ENCODE measurements at regions of chr17 and their contacts with region 1.

Region 1: DNA sequence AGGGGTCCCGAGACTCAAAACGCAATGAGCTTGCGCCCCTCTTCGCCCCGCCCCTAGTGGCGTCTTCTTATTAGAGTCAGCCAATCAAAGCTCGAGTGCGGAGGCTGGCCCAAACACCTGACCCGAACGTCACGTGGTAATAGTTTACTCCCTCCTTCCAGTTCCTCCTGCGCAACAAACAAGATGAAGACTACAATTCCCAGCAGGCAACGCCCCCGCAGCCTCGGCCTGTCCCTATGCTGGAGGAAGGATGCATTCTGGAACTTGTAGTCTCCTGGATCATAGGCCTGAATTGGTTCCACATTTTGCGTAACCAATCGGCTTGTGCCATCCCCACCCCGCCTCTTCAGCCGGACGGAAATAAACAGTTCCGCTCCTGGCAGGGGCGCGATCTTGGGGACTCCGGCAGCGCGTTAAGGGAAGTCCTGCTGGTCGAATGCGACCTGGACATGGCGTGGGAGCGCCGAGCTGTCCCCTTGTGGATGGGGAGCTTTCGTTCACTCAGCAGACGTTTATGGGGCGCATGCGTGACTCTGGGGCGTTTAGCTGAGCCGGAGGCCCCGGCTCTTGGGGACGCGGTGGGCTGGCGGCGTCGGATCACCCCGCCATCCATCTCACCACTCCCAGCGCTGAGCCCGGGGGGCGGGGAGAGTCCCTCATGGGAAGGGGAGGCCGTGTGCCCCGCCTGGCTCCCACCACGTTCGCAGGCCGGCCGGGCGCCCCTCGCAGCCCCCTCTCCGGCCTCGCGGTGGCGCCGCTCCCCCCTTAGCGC is at the start of gene WBP2:
- DNase-seq: peak; percentile 100
- H3K4me3 ChIP-seq: peak within 1 kb of the TSS; percentile 79 to 97 (median 89)
- H3K27ac ChIP-seq: peak within 1 kb of the TSS; percentile 96 to 100 (median 98)
- H3K4me1 ChIP-seq: peaks cover 0 to 48% (median 39%) of the 10 kb centered on the region in 4 donors
- H3K27me3 ChIP-seq: no peaks in the 10 kb centered on the region
- CTCF ChIP-seq: peak; percentile 22 to 51 (median 32)
- EP300 ChIP-seq: no peak
- POLR2A ChIP-seq: peak; percentile 93 to 98
- total RNA-seq, gene WBP2: 44.2 to 73.1 (median 56.9) TPM

Region 2: GRCh38 chr17:75784473-75785015 is 71.0 kb before region 1 on chr17 and contains the start of gene UNK:
- intact Hi-C with region 1: loop called (anchors 2 kb)
- DNase-seq: peak; percentile 100
- H3K4me3 ChIP-seq: peak within 1 kb of the TSS; percentile 74 to 85 (median 78)
- H3K27ac ChIP-seq: peak within 1 kb of the TSS; percentile 95 to 99 (median 97)
- H3K4me1 ChIP-seq: peaks cover 0 to 49% (median 33%) of the 10 kb centered on the region in 4 donors
- H3K27me3 ChIP-seq: no peaks in the 10 kb centered on the region
- CTCF ChIP-seq: no peak
- EP300 ChIP-seq: peak in 1 of 4 donors; percentile 81
- POLR2A ChIP-seq: peak; percentile 43 to 76
- total RNA-seq, gene UNK: 18.9 to 29.6 (median 26.4) TPM

Region 3: GRCh38 chr17:75896415-75897159 is 41.1 kb after region 1 on chr17 and contains the start of gene TRIM65:
- intact Hi-C with region 1: loop called (anchors 1 kb)
- DNase-seq: peak; percentile 94
- H3K4me3 ChIP-seq: peak within 1 kb of the TSS; percentile 73 to 95 (median 83)
- H3K27ac ChIP-seq: peak within 1 kb of the TSS; percentile 95 to 98 (median 96)
- H3K4me1 ChIP-seq: peaks cover 0 to 39% (median 34%) of the 10 kb centered on the region in 4 donors
- H3K27me3 ChIP-seq: no peaks in the 10 kb centered on the region
- CTCF ChIP-seq: no peak
- EP300 ChIP-seq: no peak
- POLR2A ChIP-seq: peak; percentile 41 to 61
- total RNA-seq, gene TRIM65: 22.4 to 27.5 (median 25.1) TPM

Measured in sigmoid colon (tissue), 7 donors.